Heart right ventricle (tissue), 16 donors: ENCODE measurements at regions of chr10 and their contacts with region 1.

Region 1: GRCh38 chr10:91163269-91163868 is 57.1 kb upstream of the PCGF5 start:
- DNase-seq: peak; percentile 67 to 73
- ATAC-seq: peak; percentile 51 to 77 (median 63)
- H3K4me3 ChIP-seq: peak overlapping the region; percentile 62 to 99 (median 92)
- H3K27ac ChIP-seq: peak overlapping the region; percentile 94 to 99 (median 98)
- H3K4me1 ChIP-seq: peaks cover 3 to 42% (median 13%) of the 10 kb centered on the region in 9 donors
- H3K27me3 ChIP-seq: peaks cover 0 to 8% (median 0%) of the 10 kb centered on the region in 7 donors
- CTCF ChIP-seq: peak in 2 of 9 donors; percentile 22 to 33

Region 2: GRCh38 chr10:91043173-91043910 is 120.0 kb before region 1 on chr10:
- intact Hi-C with region 1: loop called in 1 of 10 experiments (anchors 10 kb)
- DNase-seq: peak in 1 of 2 donors; percentile 22
- ATAC-seq: peak; percentile 58 to 90 (median 84)
- H3K4me3 ChIP-seq: no peak overlapping the region
- H3K27ac ChIP-seq: no peak overlapping the region
- H3K4me1 ChIP-seq: peaks cover 0 to 22% (median 0%) of the 10 kb centered on the region in 9 donors
- H3K27me3 ChIP-seq: no peaks in the 10 kb centered on the region
- CTCF ChIP-seq: peak; percentile 15 to 69 (median 50)

Region 3: DNA sequence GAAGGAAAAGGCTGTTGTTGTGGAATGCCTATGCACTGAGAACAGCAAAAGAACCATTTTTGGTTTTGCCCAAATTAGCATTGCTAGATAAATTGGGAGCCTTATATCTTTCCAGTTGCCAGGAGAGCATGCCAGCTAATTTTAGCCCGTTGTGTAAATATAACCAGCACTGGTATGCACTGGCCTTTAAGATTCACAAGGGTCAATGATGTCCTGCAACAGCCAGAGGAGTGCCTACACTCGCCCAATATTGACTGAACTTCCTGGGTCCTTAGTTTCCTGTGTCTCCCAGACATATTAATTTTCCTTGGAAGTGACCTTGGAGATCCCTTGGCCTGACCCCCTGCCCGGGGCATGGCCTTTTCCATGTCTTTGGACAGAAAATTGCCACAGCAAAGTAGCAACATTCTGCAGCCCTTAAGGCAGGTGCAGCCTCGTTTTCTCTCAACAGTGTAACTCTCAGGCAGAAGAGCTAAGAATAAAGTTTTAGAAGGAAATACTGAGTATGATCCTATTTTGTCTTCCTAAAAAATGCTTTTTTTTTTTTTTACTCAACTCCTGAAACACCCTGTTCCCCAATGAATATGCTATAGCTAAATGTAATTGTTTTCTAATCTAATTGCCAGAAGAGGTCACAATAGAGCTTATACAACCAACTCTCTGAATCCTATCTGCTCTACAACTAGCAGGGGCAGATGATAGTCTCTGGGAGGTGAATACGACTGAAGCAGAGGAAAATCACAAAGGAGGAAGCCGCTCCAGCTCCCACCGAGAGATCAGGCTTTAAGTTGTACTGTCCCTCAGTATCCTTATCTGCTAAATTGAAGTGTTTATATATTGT is 74.8 kb before region 1 on chr10:
- intact Hi-C with region 1: loop called in 2 of 10 experiments (anchors 2 to 5 kb)
- DNase-seq: peak in 1 of 2 donors; percentile 55
- ATAC-seq: peak; percentile 81 to 98 (median 93)
- H3K4me3 ChIP-seq: no peak overlapping the region
- H3K27ac ChIP-seq: peak overlapping the region; percentile 24 to 92 (median 78)
- H3K4me1 ChIP-seq: peaks cover 0 to 30% (median 10%) of the 10 kb centered on the region in 9 donors
- H3K27me3 ChIP-seq: no peaks in the 10 kb centered on the region
- CTCF ChIP-seq: peak in 7 of 9 donors; percentile 10 to 40 (median 31)

Region 4: DNA sequence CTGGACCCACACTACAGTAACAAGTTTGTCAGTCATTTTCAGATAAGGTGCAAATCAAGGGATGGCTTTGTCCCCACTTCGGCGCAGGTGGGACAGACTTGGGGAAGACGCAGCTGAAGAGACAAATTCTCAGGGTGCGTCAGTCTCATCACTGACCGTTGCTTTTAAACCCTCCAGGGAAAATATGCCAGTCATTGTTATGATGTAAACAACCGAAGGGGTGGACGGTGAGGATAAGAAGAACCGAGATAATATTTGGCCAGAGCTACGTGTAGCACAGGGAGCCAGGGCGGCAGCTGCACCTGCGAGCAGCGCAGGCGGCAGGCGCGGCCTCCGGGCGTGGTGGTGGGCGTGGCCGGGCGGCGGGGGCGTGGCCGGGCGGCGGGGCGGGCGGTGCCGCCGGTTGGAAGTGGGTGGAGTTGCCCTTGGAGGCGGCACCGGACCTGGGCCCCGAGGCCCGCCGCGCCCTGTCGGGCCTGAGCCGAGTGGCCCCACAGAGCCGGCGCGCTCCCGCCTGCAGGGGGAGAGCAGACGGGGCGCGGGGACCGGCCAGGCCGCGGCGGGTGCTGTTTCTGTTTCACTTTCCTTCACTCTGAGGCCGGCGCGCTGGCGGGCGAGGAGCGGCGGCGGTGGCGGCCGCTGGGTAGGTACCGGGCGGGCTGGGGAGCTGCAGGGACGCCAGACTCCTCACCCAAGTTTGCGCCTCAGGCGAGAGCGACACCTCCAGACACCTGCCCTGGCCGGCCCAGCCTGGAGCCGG is 57.0 kb after region 1 on chr10 and contains the start of gene PCGF5:
- intact Hi-C with region 1: loop called in 9 of 10 experiments (anchors 2 to 10 kb)
- DNase-seq: peak; percentile 88 to 94
- ATAC-seq: peak; percentile 98 to 100 (median 99)
- H3K4me3 ChIP-seq: peak within 1 kb of the TSS; percentile 52 to 98 (median 94)
- H3K27ac ChIP-seq: peak within 1 kb of the TSS; percentile 53 to 97 (median 92)
- H3K4me1 ChIP-seq: peaks cover 0 to 59% (median 47%) of the 10 kb centered on the region in 9 donors
- H3K27me3 ChIP-seq: no peaks in the 10 kb centered on the region
- CTCF ChIP-seq: peak; percentile 4 to 56 (median 41)
- total RNA-seq, gene PCGF5: 65.4 to 104 (median 79.5) TPM

Region 5: DNA sequence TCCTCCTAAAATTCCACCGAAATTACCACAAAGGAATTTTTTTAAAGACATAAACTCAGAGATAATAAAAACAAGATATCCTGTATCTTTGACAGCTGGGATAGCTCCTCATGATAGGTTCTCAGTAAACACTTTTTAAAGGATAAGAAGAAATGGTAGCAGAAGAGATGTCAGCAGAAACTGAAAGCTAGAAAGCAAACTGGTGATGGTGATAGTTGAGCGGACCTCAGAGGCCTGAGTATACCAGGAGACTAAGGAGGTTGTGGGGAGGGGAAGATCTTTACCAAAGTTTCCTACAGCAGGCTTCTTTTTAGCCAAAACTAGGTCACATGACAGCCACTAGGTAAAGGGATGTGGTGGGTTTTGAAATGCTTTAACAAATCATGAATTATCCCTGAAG is 79.6 kb after region 1 on chr10:
- intact Hi-C with region 1: loop called in 2 of 10 experiments (anchors 5 to 10 kb)
- DNase-seq: no peak
- ATAC-seq: no peak
- H3K4me3 ChIP-seq: no peak overlapping the region
- H3K27ac ChIP-seq: no peak overlapping the region
- H3K4me1 ChIP-seq: peaks cover 0 to 28% (median 11%) of the 10 kb centered on the region in 9 donors
- H3K27me3 ChIP-seq: no peaks in the 10 kb centered on the region
- CTCF ChIP-seq: no peak